ENCODE measurements at regions of chr7 and their contacts with region 1.

Region 1: GRCh38 chr7:31938653-31939052 is 131.6 kb downstream of the PDE1C start:
- DNase-seq: peak; percentile 80
- H3K4me3 Mint-ChIP-seq: no peak overlapping the region
- H3K27ac Mint-ChIP-seq: peak overlapping the region; percentile 80
- H3K4me1 Mint-ChIP-seq: peaks cover 84% of the 10 kb centered on the region
- H3K27me3 Mint-ChIP-seq: no peaks in the 10 kb centered on the region
- CTCF ChIP-seq: peak; percentile 78

Region 2: GRCh38 chr7:31782411-31782991 is 156.2 kb before region 1 on chr7:
- CTCF ChIA-PET with region 1: interaction called, 3 read pairs
- intact Hi-C with region 1: loop called (anchors 2 kb)
- DNase-seq: peak; percentile 57
- H3K4me3 Mint-ChIP-seq: no peak overlapping the region
- H3K27ac Mint-ChIP-seq: no peak overlapping the region
- H3K4me1 Mint-ChIP-seq: peaks cover 6% of the 10 kb centered on the region
- H3K27me3 Mint-ChIP-seq: no peaks in the 10 kb centered on the region
- CTCF ChIP-seq: peak; percentile 92

Region 3: DNA sequence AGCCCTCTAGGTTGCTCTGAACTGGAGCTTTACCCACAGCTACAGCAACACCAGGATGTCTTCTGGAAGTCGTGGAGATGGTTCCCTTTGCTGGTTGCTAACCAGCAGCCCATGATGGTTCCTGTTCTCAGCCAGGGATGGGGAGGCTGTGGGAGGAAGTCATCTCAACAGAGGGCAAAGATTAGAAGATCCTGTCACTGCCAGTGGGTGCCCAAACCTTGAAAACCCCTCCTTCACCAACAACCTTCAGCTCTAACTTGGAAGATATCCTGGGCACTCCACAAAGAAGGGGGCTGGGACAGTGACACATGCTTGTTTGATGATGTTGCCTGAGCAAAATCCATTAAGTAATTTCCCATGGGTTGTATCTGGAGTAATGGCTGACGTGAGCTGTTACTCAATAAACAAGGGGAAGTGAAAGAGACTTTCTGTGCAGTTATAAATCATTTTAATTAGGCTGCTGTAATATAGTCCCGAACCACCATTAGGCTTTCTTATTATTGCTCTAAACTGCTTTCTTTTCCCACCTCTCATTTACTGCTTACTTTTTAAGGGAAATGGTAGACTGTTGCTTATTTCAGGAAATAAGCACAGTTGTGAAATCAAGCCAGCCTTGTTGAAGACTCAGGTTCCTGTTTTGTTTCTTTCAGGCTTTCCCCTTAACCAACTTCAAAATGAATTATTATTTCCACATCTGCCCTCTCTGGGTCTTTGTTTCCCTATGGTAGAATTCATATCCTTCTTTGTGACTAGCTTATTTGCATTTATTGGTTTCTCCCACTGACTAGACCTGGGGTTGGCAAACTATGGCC is 126.8 kb before region 1 on chr7:
- CTCF ChIA-PET with region 1: interaction called, 25 read pairs
- intact Hi-C with region 1: loop called (anchors 1 kb)
- DNase-seq: no peak
- H3K4me3 Mint-ChIP-seq: no peak overlapping the region
- H3K27ac Mint-ChIP-seq: no peak overlapping the region
- H3K4me1 Mint-ChIP-seq: peaks cover 25% of the 10 kb centered on the region
- H3K27me3 Mint-ChIP-seq: no peaks in the 10 kb centered on the region
- CTCF ChIP-seq: no peak

Region 4: GRCh38 chr7:31899356-31899927 is 39.2 kb before region 1 on chr7:
- CTCF ChIA-PET with region 1: interaction called, 24 read pairs
- intact Hi-C with region 1: loop called (anchors 2 kb)
- DNase-seq: peak; percentile 45
- H3K4me3 Mint-ChIP-seq: peak overlapping the region; percentile 69
- H3K27ac Mint-ChIP-seq: peak overlapping the region; percentile 88
- H3K4me1 Mint-ChIP-seq: peaks cover 28% of the 10 kb centered on the region
- H3K27me3 Mint-ChIP-seq: no peaks in the 10 kb centered on the region
- CTCF ChIP-seq: no peak

Region 5: DNA sequence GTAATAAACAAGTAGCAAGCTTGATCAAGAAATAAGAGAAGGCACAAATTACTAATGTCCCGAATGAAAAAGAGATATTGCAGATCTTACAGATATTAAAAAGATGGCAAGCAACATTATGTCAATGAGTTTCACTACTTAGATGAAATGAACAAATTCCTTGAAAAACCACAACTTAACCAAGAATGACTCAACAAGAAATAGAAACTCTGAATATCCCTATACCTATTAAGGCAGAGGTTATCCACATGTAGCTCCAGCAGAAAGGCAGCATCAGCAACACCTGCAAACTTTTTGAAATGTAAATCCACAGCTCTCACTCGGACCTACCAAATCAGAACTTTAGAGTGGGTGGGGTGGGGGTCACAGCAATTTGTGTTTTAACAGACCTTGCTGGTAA is 97.9 kb after region 1 on chr7:
- CTCF ChIA-PET with region 1: interaction called, 7 read pairs
- intact Hi-C with region 1: loop called (anchors 1 kb)
- DNase-seq: no peak
- H3K4me3 Mint-ChIP-seq: no peak overlapping the region
- H3K27ac Mint-ChIP-seq: peak overlapping the region; percentile 2
- H3K4me1 Mint-ChIP-seq: peaks cover 92% of the 10 kb centered on the region
- H3K27me3 Mint-ChIP-seq: no peaks in the 10 kb centered on the region
- CTCF ChIP-seq: no peak